Activated B cell treated with CpG ODN at 0.5 μM for 24 hours (primary cell): ENCODE measurements at regions of chr14 and their contacts with region 1.

Region 1: GRCh38 chr14:64303471-64303917 is 9.3 kb upstream of the ESR2 start:
- DNase-seq: no peak
- ATAC-seq: peak; percentile 65
- H3K4me3 Mint-ChIP-seq: no peak overlapping the region
- H3K27ac Mint-ChIP-seq: no peak overlapping the region
- H3K4me1 Mint-ChIP-seq: peaks cover 2% of the 10 kb centered on the region
- H3K27me3 Mint-ChIP-seq: no peaks in the 10 kb centered on the region
- CTCF ChIP-seq: peak; percentile 93

Region 2: GRCh38 chr14:63174760-63175211 is 1128.7 kb before region 1 on chr14:
- CTCF ChIA-PET with region 1: no interaction called
- POLR2A ChIA-PET with region 1: no interaction called
- intact Hi-C with region 1: loop called (anchors 10 kb)
- DNase-seq: no peak
- ATAC-seq: no peak
- H3K4me3 Mint-ChIP-seq: no peak overlapping the region
- H3K27ac Mint-ChIP-seq: no peak overlapping the region
- H3K4me1 Mint-ChIP-seq: no peaks in the 10 kb centered on the region
- H3K27me3 Mint-ChIP-seq: peaks cover 6% of the 10 kb centered on the region
- CTCF ChIP-seq: no peak

Region 3: GRCh38 chr14:63632932-63633514 is 670.5 kb before region 1 on chr14:
- CTCF ChIA-PET with region 1: interaction called, 4 read pairs
- POLR2A ChIA-PET with region 1: no interaction called
- intact Hi-C with region 1: loop called (anchors 5 kb)
- DNase-seq: no peak
- ATAC-seq: peak; percentile 80
- H3K4me3 Mint-ChIP-seq: no peak overlapping the region
- H3K27ac Mint-ChIP-seq: no peak overlapping the region
- H3K4me1 Mint-ChIP-seq: peaks cover 20% of the 10 kb centered on the region
- H3K27me3 Mint-ChIP-seq: no peaks in the 10 kb centered on the region
- CTCF ChIP-seq: no peak

Region 4: DNA sequence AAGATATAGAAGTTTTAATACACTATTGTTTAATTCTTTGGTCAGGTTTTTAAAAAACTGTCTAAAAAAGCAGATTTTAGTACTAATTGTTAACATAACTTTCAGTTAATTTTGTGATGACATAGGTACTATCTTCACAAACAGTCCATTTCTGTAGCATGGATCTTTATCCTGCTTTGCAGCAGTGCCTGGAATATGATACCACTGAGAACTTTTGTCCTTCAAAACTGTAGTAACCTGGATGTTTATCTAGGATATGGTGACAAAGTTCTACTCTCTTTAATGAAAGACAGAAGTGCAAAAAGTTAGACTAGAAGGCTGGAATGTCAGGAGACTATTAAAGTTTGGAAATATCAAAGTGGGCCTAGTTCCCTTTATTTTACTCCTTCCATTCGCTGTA is 290.8 kb before region 1 on chr14:
- CTCF ChIA-PET with region 1: interaction called, 33 read pairs
- POLR2A ChIA-PET with region 1: no interaction called
- intact Hi-C with region 1: no loop called
- DNase-seq: no peak
- ATAC-seq: no peak
- H3K4me3 Mint-ChIP-seq: no peak overlapping the region
- H3K27ac Mint-ChIP-seq: no peak overlapping the region
- H3K4me1 Mint-ChIP-seq: no peaks in the 10 kb centered on the region
- H3K27me3 Mint-ChIP-seq: no peaks in the 10 kb centered on the region
- CTCF ChIP-seq: no peak

Region 5: DNA sequence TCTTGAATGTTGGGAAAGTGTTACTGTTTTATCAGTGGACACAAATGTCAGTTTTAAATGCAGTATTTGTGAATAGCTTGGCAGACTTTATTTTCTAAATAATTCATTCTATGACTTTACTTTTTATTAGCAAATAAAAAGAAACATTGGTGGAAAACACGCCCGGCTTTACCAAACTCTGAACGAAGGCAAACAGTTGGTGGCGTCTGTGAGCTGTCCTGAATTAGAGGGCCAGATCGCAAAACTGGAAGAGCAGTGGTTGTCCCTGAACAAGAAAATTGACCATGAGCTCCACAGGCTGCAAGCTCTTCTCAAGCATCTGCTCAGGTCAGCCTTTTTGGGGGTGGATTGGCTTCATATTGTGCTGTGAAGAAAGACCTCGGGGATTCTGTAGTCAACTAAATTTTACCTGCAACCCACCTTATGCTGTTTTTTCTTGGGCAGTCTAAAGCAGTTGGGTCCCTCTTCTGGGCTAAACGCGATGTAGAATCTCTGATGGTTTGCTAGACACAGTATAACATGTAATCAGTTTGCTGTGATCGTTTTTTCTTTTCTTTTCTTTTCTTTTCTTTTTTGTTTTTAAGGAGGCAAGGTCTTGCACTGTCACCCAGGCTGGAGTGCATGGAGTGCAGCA is 165.7 kb before region 1 on chr14:
- CTCF ChIA-PET with region 1: interaction called, 34 read pairs
- POLR2A ChIA-PET with region 1: interaction called, 4 read pairs
- intact Hi-C with region 1: loop called (anchors 1 kb)
- DNase-seq: no peak
- ATAC-seq: no peak
- H3K4me3 Mint-ChIP-seq: no peak overlapping the region
- H3K27ac Mint-ChIP-seq: no peak overlapping the region
- H3K4me1 Mint-ChIP-seq: no peaks in the 10 kb centered on the region
- H3K27me3 Mint-ChIP-seq: no peaks in the 10 kb centered on the region
- CTCF ChIP-seq: no peak

Region 6: DNA sequence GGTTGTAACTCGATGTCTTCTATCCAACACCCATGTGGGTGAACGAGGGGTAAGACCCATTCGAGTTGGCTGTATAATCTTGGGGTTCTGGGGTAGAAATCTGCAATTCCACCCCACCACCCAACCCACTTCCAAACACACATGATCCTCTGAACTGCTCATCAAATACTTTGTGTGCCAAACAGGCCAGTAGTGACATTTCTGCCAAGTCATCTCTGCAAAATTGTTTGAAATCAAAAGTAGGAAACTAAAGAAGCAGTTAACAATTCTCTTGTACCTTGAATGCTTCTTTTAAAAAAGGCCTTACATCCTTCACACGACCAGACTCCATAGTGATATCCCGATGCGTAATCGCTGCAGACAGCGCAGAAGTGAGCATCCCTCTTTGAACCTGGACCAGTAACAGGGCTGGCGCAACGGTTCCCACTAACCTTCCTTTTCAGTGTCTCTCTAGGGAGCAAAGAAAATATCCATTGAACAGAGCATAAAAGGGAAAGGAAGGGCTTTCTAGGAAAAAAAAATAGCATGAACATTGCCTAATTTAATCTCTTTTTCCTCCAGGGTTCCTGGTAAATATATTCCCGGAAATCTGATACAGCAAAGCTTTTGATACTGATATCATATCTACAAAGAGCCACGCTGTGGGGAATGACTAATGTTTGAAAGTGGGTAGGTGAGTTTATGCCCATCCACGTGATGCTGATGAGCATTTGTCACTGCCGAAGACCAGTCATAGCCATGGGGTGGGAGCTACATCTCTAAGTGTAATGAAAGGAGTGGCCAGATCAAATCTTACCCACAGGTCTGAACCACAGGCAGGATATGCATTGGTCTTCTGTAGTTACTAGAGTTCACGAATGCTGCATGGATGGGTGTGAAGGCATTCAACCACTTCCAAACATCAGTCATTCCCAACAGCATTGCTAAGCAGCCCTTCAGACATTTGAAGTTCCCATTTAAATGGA is 23.5 kb before region 1 on chr14:
- CTCF ChIA-PET with region 1: no interaction called
- POLR2A ChIA-PET with region 1: no interaction called
- intact Hi-C with region 1: no loop called
- DNase-seq: no peak
- ATAC-seq: no peak
- H3K4me3 Mint-ChIP-seq: no peak overlapping the region
- H3K27ac Mint-ChIP-seq: no peak overlapping the region
- H3K4me1 Mint-ChIP-seq: peaks cover 10% of the 10 kb centered on the region
- H3K27me3 Mint-ChIP-seq: no peaks in the 10 kb centered on the region
- CTCF ChIP-seq: no peak

Region 7: GRCh38 chr14:64478634-64479250 is 175.2 kb after region 1 on chr14:
- CTCF ChIA-PET with region 1: interaction called, 13 read pairs
- POLR2A ChIA-PET with region 1: no interaction called
- intact Hi-C with region 1: loop called (anchors 1 kb)
- DNase-seq: no peak
- ATAC-seq: no peak
- H3K4me3 Mint-ChIP-seq: no peak overlapping the region
- H3K27ac Mint-ChIP-seq: no peak overlapping the region
- H3K4me1 Mint-ChIP-seq: peaks cover 4% of the 10 kb centered on the region
- H3K27me3 Mint-ChIP-seq: no peaks in the 10 kb centered on the region
- CTCF ChIP-seq: peak; percentile 23